ENCODE measurements at regions of chr20 and their contacts with region 1.

Region 1: DNA sequence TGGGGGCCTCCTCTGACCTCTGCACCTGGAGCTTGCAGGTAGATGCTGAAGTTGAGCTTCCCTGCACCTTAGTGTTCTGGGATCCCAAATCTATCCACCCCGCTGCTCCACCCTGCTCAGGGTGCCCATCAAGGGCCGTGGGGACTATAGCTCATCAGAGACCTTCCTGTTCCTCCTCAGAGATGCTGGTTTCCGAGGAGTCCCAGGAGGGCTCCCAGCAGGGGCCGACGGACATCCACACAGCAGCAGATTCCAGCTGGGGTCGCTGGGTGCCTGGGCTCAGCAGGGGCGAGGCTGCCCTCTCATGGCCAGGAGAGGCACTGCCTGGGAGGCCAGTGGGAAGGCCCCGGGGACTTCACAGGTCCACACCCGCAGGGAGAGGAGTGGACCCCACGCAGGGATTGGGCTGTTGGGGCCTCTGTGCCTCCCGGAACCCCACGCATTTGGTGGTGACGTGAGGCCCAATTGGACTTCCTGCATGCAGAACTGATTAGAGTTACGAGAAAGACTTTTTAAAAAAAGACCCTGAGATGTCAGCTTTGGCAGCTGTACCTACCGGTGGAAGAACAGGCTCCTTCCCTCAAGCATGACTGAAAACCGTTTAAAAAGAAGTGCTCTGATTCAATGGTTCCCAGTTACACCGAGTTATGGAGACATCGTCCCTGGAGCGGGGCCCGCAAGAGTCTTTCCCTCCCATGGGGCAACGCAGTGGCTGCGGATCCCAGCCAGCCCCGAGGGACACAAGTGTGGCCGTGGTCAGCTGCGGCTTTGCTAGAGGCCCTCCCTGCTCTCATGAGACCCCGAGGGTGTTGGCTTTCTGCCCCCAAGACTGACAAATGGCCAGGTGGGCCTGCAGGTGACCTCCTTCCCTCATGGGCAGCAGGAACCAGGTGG is 25.3 kb upstream of the SLCO4A1 start:
- DNase-seq: peak in 1 of 2 experiments; percentile 83
- H3K4me3 ChIP-seq: no peak overlapping the region
- H3K27ac ChIP-seq: no peak overlapping the region
- H3K4me1 ChIP-seq: peaks cover 0 to 8% (median 6%) of the 10 kb centered on the region in 4 experiments; a peak in 6 of 7 replicates
- H3K27me3 ChIP-seq: no peaks in the 10 kb centered on the region; a peak in 1 of 7 replicates
- CTCF ChIP-seq: peak; percentile 92 to 99 (median 96)
- EP300 ChIP-seq: no peak
- POLR2A ChIP-seq: no peak
- RAD21 ChIP-seq: peak; percentile 93 to 96

Region 2: GRCh38 chr20:62400021-62400420 is 217.0 kb before region 1 on chr20:
- CTCF ChIA-PET with region 1: no interaction called
- POLR2A ChIA-PET with region 1: no interaction called
- DNase-seq: no peak
- H3K4me3 ChIP-seq: no peak overlapping the region
- H3K27ac ChIP-seq: no peak overlapping the region
- H3K4me1 ChIP-seq: peaks cover 0 to 5% (median 3%) of the 10 kb centered on the region in 4 experiments; a peak in 5 of 7 replicates
- H3K27me3 ChIP-seq: no peaks in the 10 kb centered on the region
- CTCF ChIP-seq: no peak
- EP300 ChIP-seq: no peak
- POLR2A ChIP-seq: no peak
- RAD21 ChIP-seq: no peak

Region 3: GRCh38 chr20:62416651-62417637 is 200.0 kb before region 1 on chr20:
- CTCF ChIA-PET with region 1: no interaction called
- POLR2A ChIA-PET with region 1: no interaction called
- DNase-seq: no peak
- H3K4me3 ChIP-seq: no peak overlapping the region
- H3K27ac ChIP-seq: no peak overlapping the region
- H3K4me1 ChIP-seq: peaks cover 0 to 3% (median 0%) of the 10 kb centered on the region in 4 experiments; a peak in 1 of 7 replicates
- H3K27me3 ChIP-seq: no peaks in the 10 kb centered on the region
- CTCF ChIP-seq: no peak
- EP300 ChIP-seq: no peak
- POLR2A ChIP-seq: no peak
- RAD21 ChIP-seq: no peak

Region 4: GRCh38 chr20:62500237-62500864 is 116.6 kb before region 1 on chr20:
- CTCF ChIA-PET with region 1: interaction called, 24 read pairs
- POLR2A ChIA-PET with region 1: no interaction called
- DNase-seq: peak in 1 of 2 experiments; percentile 93
- H3K4me3 ChIP-seq: no peak overlapping the region
- H3K27ac ChIP-seq: no peak overlapping the region
- H3K4me1 ChIP-seq: peaks cover 0 to 12% (median 3%) of the 10 kb centered on the region in 4 experiments; a peak in 4 of 7 replicates
- H3K27me3 ChIP-seq: peaks cover 0 to 5% (median 2%) of the 10 kb centered on the region in 4 experiments; a peak in 2 of 7 replicates
- CTCF ChIP-seq: peak; percentile 79 to 93 (median 89)
- EP300 ChIP-seq: no peak
- POLR2A ChIP-seq: no peak
- RAD21 ChIP-seq: peak; percentile 83 to 92

Region 5: DNA sequence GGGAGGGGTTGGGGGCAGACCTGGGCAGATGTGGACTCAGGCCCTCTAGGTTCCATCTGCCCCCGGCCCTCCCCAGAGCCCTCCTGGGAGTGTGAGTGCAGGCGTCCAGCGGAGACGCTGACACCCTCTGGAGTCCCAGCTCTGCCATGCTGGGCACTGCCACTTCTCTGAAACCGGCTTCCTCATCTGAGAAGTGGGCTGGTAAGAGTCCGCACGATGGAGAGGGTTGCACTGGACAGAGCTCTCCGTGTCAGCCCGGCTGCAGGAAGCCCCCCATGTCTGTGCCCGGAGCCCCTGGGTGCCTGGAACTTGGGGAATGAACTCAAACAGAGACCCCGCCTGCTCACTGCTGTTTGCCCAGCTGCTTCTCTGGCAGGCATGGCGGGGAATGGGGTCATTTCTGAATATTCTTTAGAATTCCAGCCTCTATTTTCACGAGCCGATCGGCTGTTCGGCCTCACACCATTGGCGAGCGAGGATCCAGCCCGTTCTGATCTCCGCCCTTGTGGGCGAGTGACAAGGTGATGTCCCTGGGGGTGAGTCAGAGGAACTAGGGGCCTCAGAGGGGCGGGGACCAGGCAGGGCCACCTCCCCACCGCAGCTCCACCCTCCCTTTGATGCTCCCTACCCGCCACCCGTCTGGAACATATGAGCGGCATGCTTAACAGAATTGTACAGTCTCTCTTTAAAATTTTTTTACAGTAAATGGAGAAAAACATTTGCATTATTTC is 93.3 kb before region 1 on chr20:
- CTCF ChIA-PET with region 1: interaction called, 14 read pairs
- POLR2A ChIA-PET with region 1: no interaction called
- DNase-seq: no peak
- H3K4me3 ChIP-seq: peak overlapping the region in 1 of 4 experiments; percentile 29; a peak in 1 of 8 replicates
- H3K27ac ChIP-seq: no peak overlapping the region
- H3K4me1 ChIP-seq: peaks cover 0 to 17% (median 11%) of the 10 kb centered on the region in 4 experiments; a peak in 6 of 7 replicates
- H3K27me3 ChIP-seq: no peaks in the 10 kb centered on the region
- CTCF ChIP-seq: no peak
- EP300 ChIP-seq: no peak
- POLR2A ChIP-seq: no peak
- RAD21 ChIP-seq: no peak

Region 6: GRCh38 chr20:62550087-62550632 is 66.8 kb before region 1 on chr20:
- CTCF ChIA-PET with region 1: interaction called, 23 read pairs
- POLR2A ChIA-PET with region 1: no interaction called
- DNase-seq: no peak
- H3K4me3 ChIP-seq: peak overlapping the region; percentile 17 to 65 (median 32); a peak in 5 of 8 replicates
- H3K27ac ChIP-seq: no peak overlapping the region
- H3K4me1 ChIP-seq: peaks cover 0 to 11% (median 2%) of the 10 kb centered on the region in 4 experiments; a peak in 5 of 7 replicates
- H3K27me3 ChIP-seq: peaks cover 10 to 30% (median 20%) of the 10 kb centered on the region in 4 experiments
- CTCF ChIP-seq: no peak
- EP300 ChIP-seq: no peak
- POLR2A ChIP-seq: no peak
- RAD21 ChIP-seq: no peak

Region 7: GRCh38 chr20:62583420-62583920 is 33.5 kb before region 1 on chr20:
- CTCF ChIA-PET with region 1: interaction called, 13 read pairs
- POLR2A ChIA-PET with region 1: no interaction called
- DNase-seq: no peak
- H3K4me3 ChIP-seq: no peak overlapping the region
- H3K27ac ChIP-seq: no peak overlapping the region
- H3K4me1 ChIP-seq: peaks cover 0 to 9% (median 1%) of the 10 kb centered on the region in 4 experiments; a peak in 5 of 7 replicates
- H3K27me3 ChIP-seq: no peaks in the 10 kb centered on the region
- CTCF ChIP-seq: peak in 2 of 3 experiments; percentile 24 to 26; a peak in 2 of 4 replicates
- EP300 ChIP-seq: no peak
- POLR2A ChIP-seq: no peak
- RAD21 ChIP-seq: peak; percentile 20 to 47; a peak in 2 of 4 replicates

Region 8: DNA sequence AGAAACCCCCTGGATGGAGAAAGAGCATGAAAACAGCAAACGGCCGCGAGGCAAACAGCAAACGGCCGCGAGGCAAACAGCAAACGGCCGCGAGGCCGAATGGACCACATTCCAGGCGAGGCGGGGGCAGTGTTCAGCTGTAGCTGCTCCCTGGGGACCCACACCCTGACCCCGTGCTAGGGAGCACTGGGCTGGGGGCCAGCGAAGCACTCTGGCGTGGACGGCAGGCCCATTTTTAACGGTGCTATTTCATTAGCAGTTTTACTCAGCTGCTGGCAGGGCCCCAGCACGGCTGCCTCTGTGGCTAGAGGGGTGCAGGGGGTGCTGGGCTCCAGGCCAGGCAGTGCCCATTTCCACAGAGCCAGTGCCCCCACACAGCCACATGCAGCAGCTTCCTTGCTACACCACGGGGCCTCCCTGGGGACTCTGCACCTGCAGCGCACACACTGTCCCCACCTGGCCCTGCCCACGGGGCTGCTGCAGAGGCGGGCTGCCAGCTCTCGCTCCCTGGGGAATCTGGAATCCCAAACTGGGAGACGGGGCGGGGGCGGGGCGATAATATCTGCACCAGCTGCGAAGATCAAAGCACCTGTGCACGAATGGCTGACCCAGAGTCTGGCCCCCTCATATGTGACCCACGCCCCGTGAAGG is 10.3 kb before region 1 on chr20:
- CTCF ChIA-PET with region 1: interaction called, 23 read pairs
- POLR2A ChIA-PET with region 1: no interaction called
- DNase-seq: no peak
- H3K4me3 ChIP-seq: no peak overlapping the region
- H3K27ac ChIP-seq: no peak overlapping the region
- H3K4me1 ChIP-seq: peaks cover 6 to 26% (median 16%) of the 10 kb centered on the region in 4 experiments
- H3K27me3 ChIP-seq: no peaks in the 10 kb centered on the region; a peak in 1 of 7 replicates
- CTCF ChIP-seq: no peak
- EP300 ChIP-seq: no peak
- POLR2A ChIP-seq: no peak
- RAD21 ChIP-seq: no peak

Region 9: DNA sequence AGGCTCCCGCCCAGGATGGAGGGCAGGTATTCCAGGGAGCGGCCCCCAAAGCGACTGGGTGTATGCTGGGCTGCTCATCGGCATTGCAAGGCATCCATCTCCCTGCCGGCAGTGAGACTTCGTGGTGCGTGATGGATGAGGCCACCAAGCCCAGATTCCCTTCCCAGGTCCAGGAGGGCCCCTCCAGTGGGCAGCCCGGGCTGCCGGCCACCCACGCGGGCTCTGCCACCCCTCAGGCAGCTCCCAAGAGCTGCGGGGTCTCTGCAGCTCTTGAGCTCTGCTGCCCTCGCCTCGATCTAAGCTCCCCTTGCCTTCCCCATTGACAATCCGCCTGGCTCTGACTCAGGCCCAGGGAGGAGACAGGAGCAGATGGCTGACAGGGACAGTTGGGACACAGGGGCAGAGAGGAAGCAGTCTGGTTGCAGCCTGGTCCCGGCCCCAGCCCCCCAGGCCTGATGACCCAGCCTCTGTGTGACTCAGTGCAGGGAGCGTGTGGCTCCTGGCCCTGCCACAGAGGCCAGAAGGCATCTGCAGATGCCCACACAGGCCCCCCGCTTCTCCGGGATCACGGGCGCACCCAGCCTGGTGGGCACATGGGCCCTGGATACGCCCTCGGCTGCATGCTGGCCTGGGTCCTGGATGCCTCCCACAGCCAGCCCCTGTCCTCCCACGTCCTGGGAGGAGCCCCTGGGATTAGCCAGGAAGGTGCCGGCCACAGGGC is 58.3 kb after region 1 on chr20:
- CTCF ChIA-PET with region 1: no interaction called
- POLR2A ChIA-PET with region 1: no interaction called
- DNase-seq: no peak
- H3K4me3 ChIP-seq: no peak overlapping the region
- H3K27ac ChIP-seq: no peak overlapping the region
- H3K4me1 ChIP-seq: no peaks in the 10 kb centered on the region
- H3K27me3 ChIP-seq: no peaks in the 10 kb centered on the region; a peak in 1 of 7 replicates
- CTCF ChIP-seq: no peak
- EP300 ChIP-seq: no peak
- POLR2A ChIP-seq: no peak
- RAD21 ChIP-seq: no peak

Region 10: DNA sequence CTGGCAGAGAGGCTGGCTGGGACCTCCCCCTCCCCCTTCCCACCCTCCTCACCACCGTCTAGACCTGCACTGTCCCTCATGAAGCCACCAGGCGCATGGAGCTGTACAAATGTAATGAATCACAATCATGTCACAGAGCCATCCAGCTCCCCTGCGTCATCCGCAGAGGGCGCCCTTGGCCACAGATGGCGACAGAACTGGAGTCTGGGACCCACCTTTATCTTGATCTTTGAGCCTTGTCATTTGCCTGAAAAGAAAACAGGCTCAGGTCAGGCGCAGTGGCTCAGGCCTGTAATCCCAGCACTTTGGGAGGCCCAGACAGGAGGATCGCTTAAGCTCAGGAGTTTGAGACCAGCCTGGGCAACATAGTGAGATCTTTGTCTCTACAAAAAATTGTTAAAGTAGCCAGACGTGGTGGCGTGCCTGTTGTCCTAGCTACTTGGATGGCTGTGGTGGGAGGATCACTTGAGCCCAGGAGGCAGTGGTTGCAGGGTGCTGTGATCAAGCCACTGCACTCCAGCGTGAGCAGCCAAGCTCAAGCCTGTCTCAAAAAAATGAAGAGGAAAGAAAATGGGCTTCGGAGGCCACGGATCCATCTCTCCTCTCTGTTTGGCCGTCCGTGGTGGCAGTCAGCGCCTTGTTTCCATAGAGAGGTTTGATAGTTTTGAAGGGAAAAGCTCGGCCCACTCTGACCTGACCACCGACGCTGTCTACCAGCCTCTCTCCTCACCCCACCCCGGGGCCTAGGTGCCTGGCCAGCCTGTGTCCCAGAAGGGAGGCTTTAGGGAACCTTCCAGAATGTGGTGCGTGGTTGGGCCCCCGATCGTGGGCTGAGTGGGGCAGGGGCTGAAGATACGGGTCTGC is 206.0 kb after region 1 on chr20:
- CTCF ChIA-PET with region 1: no interaction called
- POLR2A ChIA-PET with region 1: no interaction called
- DNase-seq: peak in 1 of 2 experiments; percentile 57
- H3K4me3 ChIP-seq: no peak overlapping the region
- H3K27ac ChIP-seq: no peak overlapping the region
- H3K4me1 ChIP-seq: peaks cover 0 to 19% (median 10%) of the 10 kb centered on the region in 4 experiments; a peak in 5 of 7 replicates
- H3K27me3 ChIP-seq: no peaks in the 10 kb centered on the region
- CTCF ChIP-seq: peak; percentile 66 to 70 (median 69)
- EP300 ChIP-seq: no peak
- POLR2A ChIP-seq: no peak
- RAD21 ChIP-seq: peak; percentile 67 to 75